A549 (cell line): ENCODE measurements at regions of chr12 and their contacts with region 1.

Region 1: GRCh38 chr12:56078990-56079664 is 838 bp upstream of the ERBB3 start:
- DNase-seq: peak; percentile 92 to 95
- ATAC-seq: peak; percentile 89 to 92
- H3K4me3 ChIP-seq: peak overlapping the region; percentile 73
- H3K27ac ChIP-seq: peak overlapping the region; percentile 87 to 96
- H3K4me1 ChIP-seq: peaks cover 30% of the 10 kb centered on the region
- CTCF ChIP-seq: peak; percentile 63
- EP300 ChIP-seq: no peak
- POLR2A ChIP-seq: peak; percentile 75
- RAD21 ChIP-seq: peak; percentile 51 to 58

Region 2: GRCh38 chr12:56041552-56042429 is 37.3 kb before region 1 on chr12 and contains the start of gene RPS26:
- CTCF ChIA-PET with region 1: interaction called, 20 read pairs
- POLR2A ChIA-PET with region 1: interaction called, 7 read pairs
- DNase-seq: peak; percentile 91 to 100
- ATAC-seq: peak; percentile 96 to 97
- H3K4me3 ChIP-seq: peak within 1 kb of the TSS; percentile 74
- H3K27ac ChIP-seq: peak within 1 kb of the TSS; percentile 90 to 99
- H3K4me1 ChIP-seq: peaks cover 16% of the 10 kb centered on the region
- CTCF ChIP-seq: peak; percentile 71
- EP300 ChIP-seq: no peak
- POLR2A ChIP-seq: peak; percentile 99
- RAD21 ChIP-seq: peak; percentile 70 to 83
- polyA plus RNA-seq, gene RPS26: 513 and 524 TPM in 2 replicates

Region 3: GRCh38 chr12:56098592-56098991 is 19.5 kb after region 1 on chr12:
- CTCF ChIA-PET with region 1: interaction called, 15 read pairs
- POLR2A ChIA-PET with region 1: interaction called, 33 read pairs
- DNase-seq: no peak
- ATAC-seq: no peak
- H3K4me3 ChIP-seq: no peak overlapping the region
- H3K27ac ChIP-seq: no peak overlapping the region
- H3K4me1 ChIP-seq: peaks cover 7% of the 10 kb centered on the region
- CTCF ChIP-seq: no peak
- EP300 ChIP-seq: no peak
- POLR2A ChIP-seq: no peak
- RAD21 ChIP-seq: no peak

Region 4: GRCh38 chr12:56104109-56104814 is 25.1 kb after region 1 on chr12 and contains the start of gene PA2G4:
- CTCF ChIA-PET with region 1: interaction called, 15 read pairs
- POLR2A ChIA-PET with region 1: interaction called, 33 read pairs
- DNase-seq: peak; percentile 99
- ATAC-seq: peak; percentile 98 to 99
- H3K4me3 ChIP-seq: peak within 1 kb of the TSS; percentile 85
- H3K27ac ChIP-seq: peak within 1 kb of the TSS; percentile 94
- H3K4me1 ChIP-seq: peaks cover 24% of the 10 kb centered on the region
- CTCF ChIP-seq: no peak
- EP300 ChIP-seq: no peak; a peak in 1 of 5 replicates
- POLR2A ChIP-seq: peak; percentile 99
- RAD21 ChIP-seq: no peak
- polyA plus RNA-seq, gene PA2G4: 452 and 717 TPM in 2 replicates

Region 5: DNA sequence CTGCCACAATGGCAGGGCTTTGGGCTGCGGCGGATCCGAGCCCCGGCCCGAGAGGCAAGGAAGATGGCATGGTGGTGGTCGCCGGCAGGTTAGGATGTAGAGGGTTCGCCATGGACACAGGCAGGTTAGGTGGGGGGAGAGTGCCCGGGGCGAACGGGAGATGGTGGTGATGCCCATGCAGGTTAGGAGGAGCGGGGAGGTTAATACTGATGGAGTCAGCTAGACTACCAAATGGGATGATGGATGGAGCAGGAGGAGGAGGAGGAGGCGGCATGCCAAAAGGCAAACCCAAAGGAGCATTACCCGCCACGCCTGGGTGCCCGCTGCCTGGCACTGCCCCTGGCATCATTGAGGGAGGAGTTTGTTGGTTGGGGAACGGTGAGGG is 85.2 kb after region 1 on chr12:
- CTCF ChIA-PET with region 1: no interaction called
- POLR2A ChIA-PET with region 1: no interaction called
- DNase-seq: no peak
- ATAC-seq: peak; percentile 1 to 5; a peak in 3 of 6 replicates
- H3K4me3 ChIP-seq: no peak overlapping the region
- H3K27ac ChIP-seq: no peak overlapping the region
- H3K4me1 ChIP-seq: peaks cover 27% of the 10 kb centered on the region
- CTCF ChIP-seq: no peak
- EP300 ChIP-seq: no peak
- POLR2A ChIP-seq: no peak
- RAD21 ChIP-seq: no peak

Region 6: GRCh38 chr12:56230432-56231183 is 151.5 kb after region 1 on chr12:
- CTCF ChIA-PET with region 1: no interaction called
- POLR2A ChIA-PET with region 1: no interaction called
- DNase-seq: no peak
- ATAC-seq: peak in 1 of 2 experiments; percentile 16; a peak in 2 of 6 replicates
- H3K4me3 ChIP-seq: no peak overlapping the region
- H3K27ac ChIP-seq: no peak overlapping the region
- H3K4me1 ChIP-seq: peaks cover 9% of the 10 kb centered on the region
- CTCF ChIP-seq: no peak
- EP300 ChIP-seq: no peak
- POLR2A ChIP-seq: no peak; the same call in 1 of the 2 replicates
- RAD21 ChIP-seq: no peak